HepG2 (cell line): ENCODE measurements at regions of chr6 and their contacts with region 1.

Region 1: DNA sequence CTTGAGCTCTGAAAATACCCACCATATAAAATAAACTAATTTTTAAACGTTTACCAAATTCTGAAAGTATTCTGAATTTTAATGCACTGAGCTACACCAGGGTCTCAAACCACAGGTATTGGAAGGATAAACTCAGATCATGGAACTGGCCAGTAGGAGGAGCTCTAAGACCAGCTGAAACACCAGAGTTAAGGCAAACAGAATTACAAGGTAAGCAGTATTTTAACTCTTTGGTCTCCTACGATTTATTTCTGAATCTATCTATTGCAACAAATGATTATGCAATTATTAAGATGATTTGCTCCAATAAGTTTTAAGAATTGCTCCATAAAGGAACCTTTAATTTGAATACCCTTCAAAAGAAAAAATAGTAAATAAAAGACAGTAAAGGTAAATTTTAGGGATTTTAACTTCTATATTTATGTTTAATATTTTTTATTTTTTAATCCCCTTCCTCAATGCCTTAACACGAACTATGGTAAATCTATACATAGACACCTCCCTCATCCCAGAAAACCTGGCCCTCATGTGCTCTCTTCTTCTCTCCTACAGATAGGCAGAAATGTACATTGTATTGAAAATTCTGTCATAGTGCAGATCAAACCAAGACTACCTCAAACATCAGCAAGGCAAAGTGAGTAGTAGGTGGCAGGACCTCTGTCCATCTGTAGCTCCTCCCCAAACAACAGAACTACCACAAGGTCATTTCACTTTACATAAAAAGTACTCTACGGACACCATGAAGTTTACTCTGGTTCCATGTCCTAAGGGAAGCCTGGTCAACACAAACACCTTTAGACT is 58.4 kb downstream of the SMLR1 start:
- DNase-seq: peak; percentile 85
- ATAC-seq: peak; percentile 95
- H3K4me3 ChIP-seq: no peak overlapping the region
- H3K27ac ChIP-seq: no peak overlapping the region
- H3K4me1 ChIP-seq: peaks cover 5% of the 10 kb centered on the region; the same call in 1 of the 2 replicates
- H3K27me3 ChIP-seq: no peaks in the 10 kb centered on the region
- CTCF ChIP-seq: peak; percentile 91
- EP300 ChIP-seq: no peak
- POLR2A ChIP-seq: no peak
- RAD21 ChIP-seq: peak; percentile 96

Region 2: GRCh38 chr6:130843575-130844320 is 41.8 kb before region 1 on chr6:
- CTCF ChIA-PET with region 1: no interaction called
- POLR2A ChIA-PET with region 1: no interaction called
- in situ Hi-C with region 1: no loop called
- intact Hi-C with region 1: no loop called
- DNase-seq: peak; percentile 74
- ATAC-seq: peak; percentile 79
- H3K4me3 ChIP-seq: no peak overlapping the region
- H3K27ac ChIP-seq: no peak overlapping the region
- H3K4me1 ChIP-seq: peaks cover 23% of the 10 kb centered on the region
- H3K27me3 ChIP-seq: no peaks in the 10 kb centered on the region
- CTCF ChIP-seq: peak; percentile 91
- EP300 ChIP-seq: no peak
- POLR2A ChIP-seq: 0 out of 4 replicates have a peak, but pooled peaks of 1 of the 2 experiments have one; percentile 18
- RAD21 ChIP-seq: peak; percentile 89

Region 3: DNA sequence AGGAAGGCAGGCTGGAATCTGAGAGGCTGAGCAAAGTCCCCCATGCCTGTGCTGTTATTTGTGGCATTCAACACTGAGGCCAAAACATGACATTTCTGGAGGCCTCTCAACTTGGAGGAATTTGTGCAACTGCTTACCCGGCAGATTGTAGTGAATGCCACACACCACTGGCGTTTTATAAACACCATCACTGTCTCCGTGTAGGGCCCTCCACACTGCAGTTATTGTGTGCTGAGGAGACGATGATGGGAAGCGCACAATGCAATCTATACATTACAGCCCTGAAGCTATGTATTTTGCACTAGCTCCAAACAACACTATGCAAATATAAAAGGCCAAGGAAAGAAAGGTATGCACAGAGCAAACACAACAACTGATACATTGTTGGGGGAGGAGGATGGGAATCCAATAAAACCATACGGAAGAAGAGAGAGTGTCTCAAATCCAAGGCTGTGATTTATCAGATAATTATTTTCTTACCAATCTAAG is 48.2 kb after region 1 on chr6:
- CTCF ChIA-PET with region 1: no interaction called
- POLR2A ChIA-PET with region 1: no interaction called
- in situ Hi-C with region 1: no loop called
- intact Hi-C with region 1: loop called (anchors 5 kb)
- DNase-seq: peak; percentile 98
- ATAC-seq: peak; percentile 97
- H3K4me3 ChIP-seq: peak overlapping the region in 2 of 3 experiments; percentile 34 to 47; a peak in 3 of 6 replicates
- H3K27ac ChIP-seq: peak overlapping the region; percentile 73
- H3K4me1 ChIP-seq: peaks cover 75% of the 10 kb centered on the region
- H3K27me3 ChIP-seq: no peaks in the 10 kb centered on the region
- CTCF ChIP-seq: no peak
- EP300 ChIP-seq: peak; percentile 84 to 95; a peak in 3 of 4 replicates
- POLR2A ChIP-seq: no peak
- RAD21 ChIP-seq: no peak; the same call in none of the 2 replicates

Region 4: DNA sequence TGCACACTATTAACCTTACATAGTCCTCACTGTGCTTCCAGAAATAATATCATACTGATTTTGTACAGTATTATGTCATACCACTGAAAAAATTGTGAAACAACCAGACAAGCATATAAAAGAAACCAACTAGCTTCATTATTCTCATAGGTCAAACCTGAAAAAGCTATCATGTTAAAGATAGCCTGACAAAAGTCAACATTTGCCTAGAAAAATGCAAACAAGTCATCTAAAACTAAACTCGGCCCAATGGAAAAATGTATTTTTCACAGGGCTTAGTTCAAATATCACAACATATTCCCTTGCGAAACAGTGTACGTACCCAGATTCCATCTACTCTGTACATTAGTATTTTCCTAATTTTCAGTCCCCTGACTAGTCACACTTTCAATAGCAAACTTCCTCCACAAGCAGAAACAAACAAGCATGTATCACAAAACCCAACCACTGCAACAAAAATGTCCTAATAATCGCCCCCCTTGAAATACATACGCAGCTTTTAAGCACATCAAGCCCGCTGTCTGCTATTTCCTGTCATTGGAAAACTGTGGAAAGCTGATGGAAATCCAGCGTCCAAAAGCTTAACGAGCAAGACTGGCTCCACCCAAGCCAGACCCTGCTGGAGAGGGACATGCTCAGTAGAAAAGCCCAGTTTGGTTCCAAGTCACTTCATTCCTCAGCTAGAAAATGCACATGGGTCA is 84.3 kb after region 1 on chr6:
- CTCF ChIA-PET with region 1: no interaction called
- POLR2A ChIA-PET with region 1: no interaction called
- in situ Hi-C with region 1: no loop called
- intact Hi-C with region 1: loop called (anchors 1 kb)
- DNase-seq: peak; percentile 80
- ATAC-seq: peak; percentile 90
- H3K4me3 ChIP-seq: peak overlapping the region; percentile 30 to 37 (median 33)
- H3K27ac ChIP-seq: peak overlapping the region; percentile 62
- H3K4me1 ChIP-seq: peaks cover 44% of the 10 kb centered on the region
- H3K27me3 ChIP-seq: no peaks in the 10 kb centered on the region
- CTCF ChIP-seq: no peak
- EP300 ChIP-seq: peak in 1 of 2 experiments; percentile 56; a peak in 1 of 4 replicates
- POLR2A ChIP-seq: no peak
- RAD21 ChIP-seq: no peak

Region 5: GRCh38 chr6:131063028-131063763 is 177.6 kb after region 1 on chr6 and contains the start of gene EPB41L2:
- CTCF ChIA-PET with region 1: no interaction called
- POLR2A ChIA-PET with region 1: interaction called, 3 read pairs
- in situ Hi-C with region 1: no loop called
- intact Hi-C with region 1: loop called (anchors 1 kb)
- DNase-seq: peak; percentile 91
- ATAC-seq: peak; percentile 87
- H3K4me3 ChIP-seq: peak within 1 kb of the TSS; percentile 70 to 92 (median 86)
- H3K27ac ChIP-seq: peak within 1 kb of the TSS; percentile 79
- H3K4me1 ChIP-seq: peaks cover 57% of the 10 kb centered on the region
- H3K27me3 ChIP-seq: no peaks in the 10 kb centered on the region; a peak in 1 of 5 replicates
- CTCF ChIP-seq: no peak
- EP300 ChIP-seq: no peak; a peak in 1 of 4 replicates
- POLR2A ChIP-seq: peak; percentile 76 to 87
- RAD21 ChIP-seq: peak; percentile 40; the same call in 1 of the 2 replicates
- total RNA-seq, gene EPB41L2: 41.7 and 42.1 TPM in 2 replicates

Region 6: GRCh38 chr6:131116749-131117360 is 231.3 kb after region 1 on chr6:
- CTCF ChIA-PET with region 1: interaction called, 114 read pairs
- POLR2A ChIA-PET with region 1: no interaction called
- in situ Hi-C with region 1: loop called (anchors 5 kb)
- intact Hi-C with region 1: loop called (anchors 1 kb)
- DNase-seq: peak; percentile 68
- ATAC-seq: peak; percentile 69
- H3K4me3 ChIP-seq: no peak overlapping the region
- H3K27ac ChIP-seq: no peak overlapping the region
- H3K4me1 ChIP-seq: peaks cover 14% of the 10 kb centered on the region
- H3K27me3 ChIP-seq: no peaks in the 10 kb centered on the region
- CTCF ChIP-seq: peak; percentile 80
- EP300 ChIP-seq: no peak
- POLR2A ChIP-seq: no peak
- RAD21 ChIP-seq: peak; percentile 77; the same call in 1 of the 2 replicates

Region 7: DNA sequence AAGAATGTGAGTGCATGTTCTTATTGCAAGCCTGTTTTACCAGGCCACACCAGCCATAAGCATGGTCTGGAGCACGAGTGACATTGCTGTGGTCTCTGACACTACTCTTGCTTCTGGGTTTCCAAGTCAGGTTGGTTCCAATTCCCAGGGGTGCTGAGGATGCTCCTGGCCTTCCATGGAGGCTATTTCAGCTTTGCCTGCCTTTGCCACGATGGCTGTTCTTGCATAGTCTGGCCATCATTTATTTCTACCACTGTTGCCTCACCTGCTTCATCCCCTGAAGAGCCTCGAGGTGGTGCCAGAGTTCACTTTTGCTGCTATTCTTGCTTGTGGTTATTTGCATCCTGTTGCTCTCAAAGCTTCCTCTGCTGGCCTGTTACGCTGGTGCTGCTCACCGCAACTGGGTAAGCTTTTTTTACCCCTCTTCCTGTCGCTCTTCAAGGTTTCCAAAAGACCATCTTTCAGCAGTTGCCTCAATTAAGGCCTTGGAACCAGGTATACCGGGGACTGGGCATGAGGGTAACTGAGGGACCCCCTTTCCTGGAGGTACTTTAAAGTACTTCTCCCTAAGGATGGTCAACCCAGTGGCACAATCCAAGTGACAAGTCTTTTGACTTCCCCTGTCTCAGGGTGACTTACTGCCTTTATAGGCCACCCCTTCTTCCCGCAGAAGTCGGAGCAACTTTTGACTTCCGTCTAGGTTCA is 314.1 kb after region 1 on chr6:
- CTCF ChIA-PET with region 1: no interaction called
- POLR2A ChIA-PET with region 1: no interaction called
- in situ Hi-C with region 1: no loop called
- intact Hi-C with region 1: loop called (anchors 10 kb)
- DNase-seq: peak; percentile 63
- ATAC-seq: peak; percentile 99
- H3K4me3 ChIP-seq: no peak overlapping the region
- H3K27ac ChIP-seq: no peak overlapping the region
- H3K4me1 ChIP-seq: no peaks in the 10 kb centered on the region
- H3K27me3 ChIP-seq: no peaks in the 10 kb centered on the region
- CTCF ChIP-seq: peak; percentile 84
- EP300 ChIP-seq: no peak
- POLR2A ChIP-seq: no peak
- RAD21 ChIP-seq: peak; percentile 68; the same call in 1 of the 2 replicates

Region 8: DNA sequence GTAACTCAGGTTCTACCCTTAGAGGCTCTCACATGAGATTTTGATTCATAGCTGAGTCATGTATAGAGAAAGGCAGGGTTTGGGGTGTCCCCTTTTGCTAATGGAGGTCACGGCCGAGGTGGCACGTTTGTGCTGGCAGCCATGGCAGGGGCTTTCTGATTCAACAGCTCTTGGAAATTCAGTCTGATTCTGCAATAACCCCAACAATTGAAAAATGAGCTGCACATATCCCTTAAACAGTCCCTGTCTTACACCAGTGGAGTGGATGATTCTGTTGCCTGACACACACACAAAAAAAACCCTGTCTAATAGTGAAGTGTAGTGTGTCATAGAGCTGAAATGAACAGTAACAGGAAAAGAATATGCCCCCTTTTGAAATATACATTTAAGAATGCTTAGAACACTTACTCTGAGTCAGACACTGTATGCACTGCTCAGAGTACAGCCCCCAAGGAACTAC is 647.0 kb after region 1 on chr6:
- CTCF ChIA-PET with region 1: interaction called, 3 read pairs
- POLR2A ChIA-PET with region 1: no interaction called
- in situ Hi-C with region 1: loop called (anchors 10 kb)
- intact Hi-C with region 1: loop called (anchors 2 kb)
- DNase-seq: no peak
- ATAC-seq: peak; percentile 37; the same call in 2 of the 3 replicates
- H3K4me3 ChIP-seq: no peak overlapping the region
- H3K27ac ChIP-seq: no peak overlapping the region
- H3K4me1 ChIP-seq: peaks cover 34% of the 10 kb centered on the region
- H3K27me3 ChIP-seq: 0 out of 5 replicates have a peak, but pooled peaks cover 0 to 3% of the 10 kb centered on the region in 2 experiments
- CTCF ChIP-seq: no peak
- EP300 ChIP-seq: no peak
- POLR2A ChIP-seq: no peak
- RAD21 ChIP-seq: no peak